ENCODE measurements at regions of chr4 and their contacts with region 1.

Region 1: DNA sequence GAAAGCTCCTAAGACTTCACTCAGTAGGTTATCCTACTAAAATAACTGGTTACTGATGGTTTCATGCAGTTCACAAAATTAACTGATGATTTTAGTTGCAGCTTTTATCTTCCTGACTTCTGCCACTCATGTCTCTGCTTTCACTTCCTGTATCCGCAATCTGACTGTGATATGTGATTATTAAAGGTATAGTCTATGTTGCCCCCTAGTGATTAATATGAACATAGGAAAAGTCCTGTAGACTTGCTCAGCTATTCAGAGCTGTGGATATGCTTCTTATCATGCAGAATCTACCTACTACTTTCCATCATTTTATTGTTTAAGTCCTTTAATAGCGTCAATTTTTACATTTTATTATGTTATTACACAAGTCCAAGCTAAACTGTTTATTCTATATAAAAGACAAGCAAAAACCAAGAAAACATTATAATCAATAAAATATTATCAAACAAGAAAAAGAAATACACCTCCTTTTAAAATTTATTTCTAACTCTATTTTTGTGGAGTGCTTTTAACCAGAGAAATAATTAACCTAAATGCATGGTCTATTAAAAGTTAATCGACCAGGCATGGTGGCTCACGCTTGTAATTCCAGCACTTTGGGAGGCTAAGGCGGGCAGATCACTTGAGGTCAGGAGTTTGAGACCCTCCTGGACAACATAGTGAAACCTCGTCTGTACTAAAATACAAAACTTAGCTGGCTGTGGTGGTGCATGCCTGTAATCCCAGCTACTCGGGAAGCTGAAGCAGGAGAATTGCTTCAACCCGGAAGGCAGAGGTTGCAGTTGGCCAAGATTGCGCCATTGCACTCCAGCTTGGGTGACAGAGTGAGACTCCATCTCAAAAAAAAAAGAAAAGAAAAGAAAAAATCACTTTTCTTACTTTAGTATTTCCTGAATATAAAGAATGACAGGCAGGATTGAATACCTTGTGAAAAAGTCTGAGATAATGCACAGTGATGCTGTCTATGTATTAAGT is 40.4 kb upstream of the TLR2 start:
- DNase-seq: peak; percentile 44 to 57 (median 55)
- ATAC-seq: peak; percentile 83
- H3K4me3 ChIP-seq: no peak overlapping the region
- H3K27ac ChIP-seq: no peak overlapping the region
- H3K4me1 ChIP-seq: peaks cover 0 to 7% of the 10 kb centered on the region in 2 experiments; a peak in 3 of 5 replicates
- H3K27me3 ChIP-seq: no peaks in the 10 kb centered on the region
- CTCF ChIP-seq: peak; percentile 35 to 63 (median 53); a peak in 5 of 6 replicates
- EP300 ChIP-seq: no peak
- POLR2A ChIP-seq: no peak
- RAD21 ChIP-seq: peak; percentile 29 to 72; a peak in 3 of 4 replicates

Region 2: GRCh38 chr4:153232768-153233167 is 410.9 kb before region 1 on chr4:
- CTCF ChIA-PET with region 1: no interaction called
- POLR2A ChIA-PET with region 1: no interaction called
- in situ Hi-C with region 1: no loop called
- intact Hi-C with region 1: loop called (anchors 10 kb)
- DNase-seq: peak in 2 of 4 experiments; percentile 32 to 35
- ATAC-seq: peak; percentile 97
- H3K4me3 ChIP-seq: no peak overlapping the region
- H3K27ac ChIP-seq: no peak overlapping the region
- H3K4me1 ChIP-seq: no peaks in the 10 kb centered on the region
- H3K27me3 ChIP-seq: peaks cover 16 to 23% of the 10 kb centered on the region in 2 experiments
- CTCF ChIP-seq: peak; percentile 51 to 55 (median 54)
- EP300 ChIP-seq: no peak
- POLR2A ChIP-seq: no peak
- RAD21 ChIP-seq: peak; percentile 29 to 57; a peak in 2 of 4 replicates

Region 3: GRCh38 chr4:153931804-153932203 is 288.1 kb after region 1 on chr4:
- CTCF ChIA-PET with region 1: no interaction called
- POLR2A ChIA-PET with region 1: no interaction called
- in situ Hi-C with region 1: no loop called
- intact Hi-C with region 1: no loop called
- DNase-seq: no peak
- ATAC-seq: no peak
- H3K4me3 ChIP-seq: no peak overlapping the region
- H3K27ac ChIP-seq: no peak overlapping the region
- H3K4me1 ChIP-seq: no peaks in the 10 kb centered on the region
- H3K27me3 ChIP-seq: peaks cover 0 to 9% of the 10 kb centered on the region in 2 experiments; a peak in 1 of 5 replicates
- CTCF ChIP-seq: no peak
- EP300 ChIP-seq: no peak
- POLR2A ChIP-seq: no peak
- RAD21 ChIP-seq: no peak